ENCODE measurements at regions of chrX and their contacts with region 1.

Region 1: DNA sequence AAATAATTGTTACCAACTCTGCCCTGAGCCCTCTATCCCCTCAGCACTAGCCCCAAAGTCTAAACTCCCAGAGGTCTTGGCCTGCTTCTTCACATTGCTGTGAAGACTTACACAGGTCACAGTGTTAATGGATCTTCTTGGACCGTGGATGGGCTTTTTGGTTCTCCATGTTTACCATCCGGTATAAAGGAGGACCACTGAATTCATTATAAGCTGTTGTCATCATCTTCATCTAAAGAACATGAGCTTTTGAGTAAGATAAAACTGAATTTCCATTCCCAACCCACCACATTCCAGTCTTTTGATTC is 8.5 kb downstream of the NUDT11 start:
- DNase-seq: no peak
- H3K4me3 Mint-ChIP-seq: no peak overlapping the region
- H3K27ac Mint-ChIP-seq: no peak overlapping the region
- H3K4me1 Mint-ChIP-seq: no peaks in the 10 kb centered on the region
- H3K27me3 Mint-ChIP-seq: peaks cover 2% of the 10 kb centered on the region

Region 2: GRCh38 chrX:51614353-51615012 is 126.6 kb after region 1 on chrX:
- CTCF ChIA-PET with region 1: interaction called, 5 read pairs
- POLR2A ChIA-PET with region 1: no interaction called
- intact Hi-C with region 1: loop called (anchors 5 kb)
- DNase-seq: no peak
- H3K4me3 Mint-ChIP-seq: no peak overlapping the region
- H3K27ac Mint-ChIP-seq: no peak overlapping the region
- H3K4me1 Mint-ChIP-seq: peaks cover 5% of the 10 kb centered on the region
- H3K27me3 Mint-ChIP-seq: peaks cover 32% of the 10 kb centered on the region